Ovary (tissue), 10 donors: ENCODE measurements at regions of chr4 and their contacts with region 1.

Region 1: DNA sequence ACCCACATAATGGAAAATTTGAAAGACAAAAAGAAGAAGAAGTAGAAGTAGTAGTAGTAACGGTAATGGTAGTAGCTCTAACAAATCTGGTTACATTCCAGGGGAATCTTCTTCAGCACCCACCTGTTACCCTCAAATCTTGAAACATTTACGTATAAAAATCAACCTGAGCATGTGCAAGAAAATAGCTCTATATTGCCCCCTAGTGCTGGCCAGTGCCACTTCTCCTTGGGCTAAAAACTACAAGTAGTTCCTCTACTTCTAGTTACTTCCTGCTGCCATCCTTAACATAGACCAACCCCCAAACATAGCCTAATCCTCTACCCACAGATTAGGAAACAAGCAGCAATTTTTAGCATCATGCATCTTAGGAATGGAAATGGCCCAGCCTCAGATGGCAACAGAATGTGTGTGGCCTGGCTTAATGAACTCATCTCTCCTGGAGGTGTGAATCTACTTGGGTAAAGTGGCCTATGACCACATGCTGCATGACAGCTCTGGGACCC is 3.1 kb downstream of the PDGFC start:
- DNase-seq: peak; percentile 55 to 77 (median 56)
- H3K4me3 ChIP-seq: peak overlapping the region; percentile 86
- H3K27ac ChIP-seq: peak overlapping the region in 1 of 2 donors; percentile 5
- H3K4me1 ChIP-seq: peaks cover 10% of the 10 kb centered on the region
- H3K27me3 ChIP-seq: no peaks in the 10 kb centered on the region
- CTCF ChIP-seq: peak; percentile 65 to 80 (median 66)
- EP300 ChIP-seq: no peak
- POLR2A ChIP-seq: no peak

Region 2: DNA sequence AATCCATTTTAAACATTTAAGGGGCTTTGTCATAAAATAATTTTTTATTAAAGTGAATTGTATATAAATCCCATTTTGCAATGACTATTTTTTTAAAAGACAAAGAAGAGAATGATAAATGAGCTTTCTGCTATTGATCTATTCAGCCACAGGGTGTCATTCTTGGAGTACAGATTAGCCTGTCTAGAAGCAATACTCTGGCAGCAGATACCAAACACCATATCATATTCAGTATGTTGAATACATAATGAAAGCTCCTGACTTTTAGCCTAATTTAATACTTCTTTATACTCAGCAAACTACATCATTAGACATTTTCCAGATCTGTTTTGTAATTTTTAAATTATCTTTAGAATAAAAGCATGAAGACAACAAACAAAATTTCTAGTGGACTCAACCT is 493.2 kb before region 1 on chr4:
- intact Hi-C with region 1: loop called in 1 of 4 experiments (anchors 10 kb)
- DNase-seq: no peak
- H3K4me3 ChIP-seq: no peak overlapping the region
- H3K27ac ChIP-seq: no peak overlapping the region
- H3K4me1 ChIP-seq: no peaks in the 10 kb centered on the region
- H3K27me3 ChIP-seq: no peaks in the 10 kb centered on the region
- CTCF ChIP-seq: peak in 2 of 3 donors; percentile 30 to 40
- EP300 ChIP-seq: no peak
- POLR2A ChIP-seq: no peak

Region 3: DNA sequence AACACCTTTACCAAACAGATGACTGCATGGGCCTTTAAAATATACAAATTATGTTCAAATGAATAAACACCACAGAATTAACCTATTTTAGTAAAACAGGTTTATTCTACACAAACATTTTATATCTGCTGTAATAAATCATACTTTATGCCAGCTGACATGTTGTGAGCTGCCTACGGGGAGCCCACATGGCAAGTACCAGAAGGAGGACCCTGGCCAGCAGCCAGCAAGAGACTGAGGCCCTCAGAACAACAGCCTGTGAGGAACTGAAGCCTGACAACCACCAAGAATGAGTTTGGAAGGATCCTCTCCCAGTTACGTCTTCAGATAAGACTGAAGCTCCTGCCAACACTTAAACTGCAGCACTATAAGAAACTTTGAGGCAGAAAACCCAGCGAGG is 373.9 kb before region 1 on chr4:
- intact Hi-C with region 1: loop called in 1 of 4 experiments (anchors 5 kb)
- DNase-seq: peak in 1 of 5 donors; percentile 20
- H3K4me3 ChIP-seq: no peak overlapping the region
- H3K27ac ChIP-seq: no peak overlapping the region
- H3K4me1 ChIP-seq: peaks cover 3% of the 10 kb centered on the region
- H3K27me3 ChIP-seq: no peaks in the 10 kb centered on the region
- CTCF ChIP-seq: no peak
- EP300 ChIP-seq: no peak
- POLR2A ChIP-seq: no peak

Region 4: GRCh38 chr4:156763511-156763910 is 205.0 kb before region 1 on chr4:
- intact Hi-C with region 1: loop called in 1 of 4 experiments (anchors 10 kb)
- DNase-seq: no peak
- H3K4me3 ChIP-seq: no peak overlapping the region
- H3K27ac ChIP-seq: no peak overlapping the region
- H3K4me1 ChIP-seq: peaks cover 7% of the 10 kb centered on the region
- H3K27me3 ChIP-seq: no peaks in the 10 kb centered on the region
- CTCF ChIP-seq: no peak
- EP300 ChIP-seq: no peak
- POLR2A ChIP-seq: no peak

Region 5: DNA sequence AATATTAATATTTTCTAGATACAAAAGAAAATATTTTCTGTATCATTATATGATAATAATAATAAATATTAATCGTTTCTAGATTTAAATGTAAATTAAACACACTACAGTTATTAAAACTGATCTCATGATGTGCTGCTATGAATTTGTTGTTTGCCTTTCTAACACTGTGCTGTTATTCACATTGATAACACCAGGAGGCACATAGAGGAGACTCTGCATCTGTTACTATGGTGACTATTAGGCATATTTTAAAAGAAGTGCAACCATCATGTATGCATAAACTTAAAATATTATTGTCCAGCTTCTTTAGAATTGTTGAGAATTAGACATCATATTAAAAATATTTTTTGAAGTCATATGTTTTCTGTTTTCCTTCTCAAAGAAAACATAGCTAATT is 14.8 kb after region 1 on chr4:
- intact Hi-C with region 1: no loop called
- DNase-seq: no peak
- H3K4me3 ChIP-seq: no peak overlapping the region
- H3K27ac ChIP-seq: no peak overlapping the region
- H3K4me1 ChIP-seq: no peaks in the 10 kb centered on the region
- H3K27me3 ChIP-seq: no peaks in the 10 kb centered on the region
- CTCF ChIP-seq: no peak
- EP300 ChIP-seq: no peak
- POLR2A ChIP-seq: no peak

Region 6: DNA sequence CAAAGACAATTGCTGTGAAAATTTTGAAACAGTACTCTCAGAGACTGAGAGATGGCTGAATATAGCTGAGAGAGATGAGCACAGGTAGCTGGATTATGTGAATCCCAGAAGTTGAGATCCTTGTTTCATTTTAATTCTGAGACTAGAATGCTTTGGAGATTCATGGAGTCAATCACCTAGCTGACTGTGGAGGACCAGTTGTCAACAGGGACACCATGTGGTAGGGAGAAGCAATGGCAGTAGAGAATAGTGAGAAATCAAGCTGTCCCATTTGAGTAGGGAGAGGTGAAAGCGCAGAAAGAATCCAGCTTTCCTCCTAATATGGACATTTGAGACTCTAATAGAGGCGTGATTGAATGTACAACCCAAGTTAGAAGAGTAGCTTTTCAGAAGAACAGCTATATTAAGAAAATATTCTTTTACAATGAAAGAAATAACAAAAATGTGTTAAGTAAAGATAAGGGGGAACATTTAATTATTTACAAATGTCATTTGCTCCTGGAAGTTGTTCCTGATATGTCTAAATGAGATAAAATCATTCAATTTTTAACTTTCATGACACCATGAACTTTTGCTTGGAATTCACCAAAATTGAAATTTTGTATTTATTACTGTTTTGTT is 77.1 kb after region 1 on chr4:
- intact Hi-C with region 1: loop called in 1 of 4 experiments (anchors 10 kb)
- DNase-seq: peak in 3 of 5 donors; percentile 16 to 31 (median 30)
- H3K4me3 ChIP-seq: no peak overlapping the region
- H3K27ac ChIP-seq: no peak overlapping the region
- H3K4me1 ChIP-seq: no peaks in the 10 kb centered on the region
- H3K27me3 ChIP-seq: no peaks in the 10 kb centered on the region
- CTCF ChIP-seq: peak; percentile 53 to 65 (median 62)
- EP300 ChIP-seq: no peak
- POLR2A ChIP-seq: no peak

Region 7: DNA sequence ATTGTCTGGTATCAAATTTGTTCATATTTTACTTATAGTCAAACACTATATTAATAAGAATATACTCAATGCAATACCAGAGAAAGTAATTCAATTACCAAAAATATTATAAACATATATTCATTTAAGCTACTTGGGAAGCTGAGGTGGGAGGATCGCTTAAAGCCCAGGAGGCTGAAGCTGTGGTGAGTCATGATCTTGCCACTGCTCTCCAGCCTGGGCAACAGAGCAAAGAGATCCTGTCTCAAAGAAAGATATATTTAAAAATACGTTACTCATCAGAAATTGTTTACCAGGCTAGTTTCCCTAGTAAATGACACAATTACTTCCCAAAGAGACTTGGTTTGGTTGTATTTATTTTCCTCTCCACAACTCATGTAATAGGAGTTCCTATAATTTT is 770.7 kb after region 1 on chr4:
- intact Hi-C with region 1: no loop called
- DNase-seq: no peak
- H3K4me3 ChIP-seq: no peak overlapping the region
- H3K27ac ChIP-seq: no peak overlapping the region
- H3K4me1 ChIP-seq: no peaks in the 10 kb centered on the region
- H3K27me3 ChIP-seq: no peaks in the 10 kb centered on the region
- CTCF ChIP-seq: no peak
- EP300 ChIP-seq: no peak
- POLR2A ChIP-seq: no peak

Region 8: GRCh38 chr4:158836018-158836369 is 1867.5 kb after region 1 on chr4:
- intact Hi-C with region 1: no loop called
- DNase-seq: no peak
- H3K4me3 ChIP-seq: no peak overlapping the region
- H3K27ac ChIP-seq: no peak overlapping the region
- H3K4me1 ChIP-seq: no peaks in the 10 kb centered on the region
- H3K27me3 ChIP-seq: no peaks in the 10 kb centered on the region
- CTCF ChIP-seq: no peak
- EP300 ChIP-seq: no peak
- POLR2A ChIP-seq: no peak